ENCODE measurements at regions of chr5 and their contacts with region 1.

Region 1: DNA sequence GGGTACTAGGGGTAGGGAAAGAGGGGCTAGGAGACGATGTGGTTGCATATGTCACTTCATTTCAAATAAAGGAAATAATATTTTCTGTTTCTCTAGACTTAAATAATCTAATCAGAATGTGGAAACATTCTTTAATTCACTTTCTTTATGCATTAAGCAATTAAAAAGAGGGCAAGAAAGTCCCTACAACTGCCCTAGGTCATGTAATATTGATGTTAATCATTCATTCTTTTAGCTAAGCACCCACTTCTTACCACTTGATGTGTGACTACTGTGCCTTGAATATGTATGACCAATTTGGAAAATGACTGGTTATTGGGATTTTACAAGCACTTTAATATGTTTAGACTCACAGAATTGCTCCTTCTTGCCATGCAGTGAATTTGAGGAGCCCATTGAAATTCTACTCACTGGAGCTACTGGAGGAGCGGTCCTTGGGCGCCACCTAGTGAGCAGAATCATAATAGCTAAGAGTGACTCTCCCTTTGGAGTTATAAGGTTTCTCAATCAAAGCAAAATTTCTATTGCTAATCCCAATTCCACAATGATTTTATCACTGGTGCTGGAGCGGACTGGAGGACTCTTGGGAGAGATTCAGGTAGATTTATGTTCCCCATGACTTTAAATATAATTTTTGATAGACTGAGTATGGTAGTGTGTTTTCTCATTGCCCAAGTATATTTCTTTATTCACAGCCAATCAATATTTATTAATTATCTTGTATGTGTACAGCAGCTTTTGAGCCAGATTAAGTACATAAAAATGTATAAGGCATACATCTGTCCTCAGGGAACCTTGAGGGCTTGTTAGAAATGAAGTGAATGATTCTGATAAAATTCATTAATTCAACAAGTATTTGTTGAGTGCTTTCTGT is 225.1 kb downstream of the ADGRV1 start:
- DNase-seq: peak; percentile 64 to 83
- H3K4me3 ChIP-seq: no peak overlapping the region
- H3K4me3 Mint-ChIP-seq: no peak overlapping the region
- H3K27ac Mint-ChIP-seq: no peak overlapping the region
- H3K4me1 ChIP-seq: no peaks in the 10 kb centered on the region
- H3K4me1 Mint-ChIP-seq: no peaks in the 10 kb centered on the region
- H3K27me3 ChIP-seq: no peaks in the 10 kb centered on the region
- H3K27me3 Mint-ChIP-seq: no peaks in the 10 kb centered on the region
- CTCF ChIP-seq: peak; percentile 84 to 91

Region 2: GRCh38 chr5:90421136-90421535 is 362.6 kb before region 1 on chr5:
- CTCF ChIA-PET with region 1: interaction called, 3 read pairs
- POLR2A ChIA-PET with region 1: no interaction called
- intact Hi-C with region 1: loop called (anchors 1 kb)
- DNase-seq: peak; percentile 50 to 55
- H3K4me3 ChIP-seq: no peak overlapping the region
- H3K4me3 Mint-ChIP-seq: no peak overlapping the region
- H3K27ac Mint-ChIP-seq: no peak overlapping the region
- H3K4me1 ChIP-seq: peaks cover 4% of the 10 kb centered on the region; the same call in 1 of the 2 replicates
- H3K4me1 Mint-ChIP-seq: no peaks in the 10 kb centered on the region
- H3K27me3 ChIP-seq: no peaks in the 10 kb centered on the region
- H3K27me3 Mint-ChIP-seq: peaks cover 9% of the 10 kb centered on the region
- CTCF ChIP-seq: peak; percentile 30 to 68

Region 3: GRCh38 chr5:90440644-90441043 is 343.1 kb before region 1 on chr5:
- CTCF ChIA-PET with region 1: interaction called, 3 read pairs
- POLR2A ChIA-PET with region 1: no interaction called
- intact Hi-C with region 1: loop called (anchors 1 kb)
- DNase-seq: no peak
- H3K4me3 ChIP-seq: no peak overlapping the region
- H3K4me3 Mint-ChIP-seq: peak overlapping the region; percentile 72
- H3K27ac Mint-ChIP-seq: peak overlapping the region; percentile 50
- H3K4me1 ChIP-seq: peaks cover 12% of the 10 kb centered on the region
- H3K4me1 Mint-ChIP-seq: peaks cover 6% of the 10 kb centered on the region
- H3K27me3 ChIP-seq: no peaks in the 10 kb centered on the region
- H3K27me3 Mint-ChIP-seq: peaks cover 3% of the 10 kb centered on the region
- CTCF ChIP-seq: no peak

Region 4: DNA sequence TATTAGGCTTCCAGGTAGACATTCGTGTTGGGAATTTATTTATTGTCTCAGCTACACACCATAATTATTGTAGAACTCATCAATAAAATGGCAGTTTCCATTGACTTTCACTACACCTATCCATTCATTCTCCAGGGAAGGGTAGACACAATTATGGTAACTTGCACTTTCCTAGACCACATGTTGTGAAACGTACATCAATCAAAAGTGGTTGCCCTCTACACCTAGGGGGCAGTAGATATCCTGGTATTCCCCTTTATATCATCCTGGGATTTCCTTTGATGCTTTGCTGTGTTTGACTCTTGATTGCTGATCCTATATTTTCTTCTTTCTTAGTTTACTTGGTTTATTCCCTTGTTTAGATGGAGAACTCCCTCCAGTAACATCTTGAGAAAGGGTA is 177.2 kb before region 1 on chr5:
- CTCF ChIA-PET with region 1: interaction called, 6 read pairs
- POLR2A ChIA-PET with region 1: no interaction called
- intact Hi-C with region 1: loop called (anchors 2 kb)
- DNase-seq: peak in 1 of 2 experiments; percentile 5
- H3K4me3 ChIP-seq: no peak overlapping the region
- H3K4me3 Mint-ChIP-seq: no peak overlapping the region
- H3K27ac Mint-ChIP-seq: no peak overlapping the region
- H3K4me1 ChIP-seq: no peaks in the 10 kb centered on the region
- H3K4me1 Mint-ChIP-seq: peaks cover 6% of the 10 kb centered on the region
- H3K27me3 ChIP-seq: no peaks in the 10 kb centered on the region; the same call in 1 of the 2 replicates
- H3K27me3 Mint-ChIP-seq: peaks cover 9% of the 10 kb centered on the region
- CTCF ChIP-seq: peak; percentile 37 to 52

Region 5: DNA sequence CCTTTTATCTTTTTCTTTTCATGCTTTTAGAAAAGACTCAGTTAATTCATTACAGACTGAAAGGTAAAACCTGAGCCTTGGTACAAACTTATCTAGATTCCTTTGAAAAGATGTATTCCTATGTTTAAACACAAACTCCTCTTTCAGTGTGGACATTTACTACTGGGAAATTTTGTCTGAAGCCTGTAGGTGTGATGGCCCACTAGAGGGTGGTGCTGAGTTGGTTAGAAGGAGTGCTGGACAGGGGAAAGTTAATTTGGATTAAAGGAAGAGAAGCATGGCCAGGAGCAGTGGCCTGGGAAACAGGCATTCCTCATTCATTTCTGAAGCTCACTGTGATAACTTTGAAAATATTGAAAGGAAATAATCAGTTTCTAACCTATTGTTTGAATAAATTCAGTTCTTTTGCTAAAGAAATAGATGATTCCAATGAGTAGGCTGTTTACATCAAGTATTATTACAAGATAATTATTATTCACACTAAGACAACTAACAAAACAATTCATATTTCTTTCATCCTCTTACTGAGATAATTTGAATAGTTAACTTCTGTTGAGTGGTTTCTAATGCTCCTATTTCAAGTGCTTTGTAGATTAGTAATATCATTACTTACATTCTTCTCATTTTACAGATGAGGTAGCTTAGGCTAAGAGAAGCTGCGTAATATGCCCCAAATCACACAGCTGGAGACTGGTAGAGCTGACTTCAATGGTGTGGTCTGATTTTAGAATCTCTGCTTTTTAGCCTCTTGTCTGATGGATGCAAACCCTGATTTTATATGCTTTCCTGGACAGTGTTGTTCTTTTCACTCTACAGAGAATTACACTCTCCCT is 74.2 kb before region 1 on chr5:
- CTCF ChIA-PET with region 1: interaction called, 9 read pairs
- POLR2A ChIA-PET with region 1: no interaction called
- intact Hi-C with region 1: loop called (anchors 1 kb)
- DNase-seq: peak; percentile 54 to 63
- H3K4me3 ChIP-seq: no peak overlapping the region
- H3K4me3 Mint-ChIP-seq: no peak overlapping the region
- H3K27ac Mint-ChIP-seq: no peak overlapping the region
- H3K4me1 ChIP-seq: no peaks in the 10 kb centered on the region
- H3K4me1 Mint-ChIP-seq: no peaks in the 10 kb centered on the region
- H3K27me3 ChIP-seq: no peaks in the 10 kb centered on the region
- H3K27me3 Mint-ChIP-seq: no peaks in the 10 kb centered on the region
- CTCF ChIP-seq: peak; percentile 68 to 91

Region 6: GRCh38 chr5:90866915-90867731 is 83.4 kb after region 1 on chr5:
- CTCF ChIA-PET with region 1: no interaction called
- POLR2A ChIA-PET with region 1: no interaction called
- intact Hi-C with region 1: no loop called
- DNase-seq: no peak
- H3K4me3 ChIP-seq: no peak overlapping the region
- H3K4me3 Mint-ChIP-seq: no peak overlapping the region
- H3K27ac Mint-ChIP-seq: no peak overlapping the region
- H3K4me1 ChIP-seq: peaks cover 25% of the 10 kb centered on the region
- H3K4me1 Mint-ChIP-seq: peaks cover 14% of the 10 kb centered on the region
- H3K27me3 ChIP-seq: no peaks in the 10 kb centered on the region
- H3K27me3 Mint-ChIP-seq: no peaks in the 10 kb centered on the region
- CTCF ChIP-seq: no peak